Gastrocnemius medialis (tissue), 4 donors: ENCODE measurements at regions of chr6 and their contacts with region 1.

Region 1: GRCh38 chr6:166627033-166627874 is at the start of gene RPS6KA2:
- DNase-seq: peak; percentile 100
- ATAC-seq: peak; percentile 72 to 77
- H3K4me3 ChIP-seq: peak within 1 kb of the TSS; percentile 71 to 81 (median 73)
- H3K27ac ChIP-seq: peak within 1 kb of the TSS; percentile 91 to 97 (median 96)
- H3K4me1 ChIP-seq: peaks cover 33 to 51% of the 10 kb centered on the region in 2 donors
- H3K27me3 ChIP-seq: no peaks in the 10 kb centered on the region
- CTCF ChIP-seq: peak in 1 of 5 experiments; percentile 25
- POLR2A ChIP-seq: peak; percentile 97 to 98
- total RNA-seq, gene RPS6KA2: 18.7 to 35.7 (median 27.4) TPM

Region 2: GRCh38 chr6:166572370-166573261 is 54.6 kb before region 1 on chr6:
- in situ Hi-C with region 1: loop called in 1 of 4 experiments (anchors 10 kb)
- intact Hi-C with region 1: loop called (anchors 2 kb)
- DNase-seq: no peak
- ATAC-seq: no peak
- H3K4me3 ChIP-seq: no peak overlapping the region
- H3K27ac ChIP-seq: peak overlapping the region in 3 of 4 donors; percentile 28 to 43 (median 34)
- H3K4me1 ChIP-seq: peaks cover 5 to 33% of the 10 kb centered on the region in 2 donors
- H3K27me3 ChIP-seq: no peaks in the 10 kb centered on the region
- CTCF ChIP-seq: no peak
- POLR2A ChIP-seq: no peak

Region 3: DNA sequence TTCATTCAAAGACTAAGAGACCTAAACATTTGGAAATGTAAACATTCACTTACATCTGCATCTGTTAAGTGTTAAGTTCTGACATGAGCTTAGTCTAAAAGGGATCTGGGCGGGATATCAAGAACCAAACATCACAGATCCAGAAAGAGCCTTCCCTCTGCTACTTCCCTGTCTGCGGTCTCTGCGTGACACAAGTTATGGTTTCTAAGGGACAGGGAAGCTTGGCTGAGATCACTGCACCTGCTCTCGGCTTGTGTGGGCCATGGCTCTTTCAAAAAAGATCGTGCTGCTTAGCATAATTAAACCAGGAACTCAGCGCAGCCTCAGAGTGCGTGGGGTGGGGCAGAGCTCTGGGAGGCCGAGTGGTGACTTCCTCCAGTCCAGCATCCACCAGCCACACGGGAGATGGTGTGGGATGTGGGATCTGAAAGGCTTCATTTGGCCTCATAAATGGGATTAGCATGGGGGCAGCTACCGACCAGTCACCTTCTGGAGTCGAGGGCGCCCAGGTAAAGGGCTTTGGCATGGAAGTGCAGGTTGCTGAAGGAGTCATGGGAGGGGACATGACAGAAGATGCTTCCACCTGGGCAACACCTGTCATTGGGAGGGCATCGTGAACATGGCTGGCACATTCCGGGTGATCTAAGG is 24.1 kb before region 1 on chr6:
- in situ Hi-C with region 1: no loop called
- intact Hi-C with region 1: no loop called
- DNase-seq: no peak
- ATAC-seq: no peak
- H3K4me3 ChIP-seq: no peak overlapping the region
- H3K27ac ChIP-seq: no peak overlapping the region
- H3K4me1 ChIP-seq: peaks cover 7 to 26% of the 10 kb centered on the region in 2 donors
- H3K27me3 ChIP-seq: no peaks in the 10 kb centered on the region
- CTCF ChIP-seq: no peak
- POLR2A ChIP-seq: no peak